PC-3 (cell line): ENCODE measurements at regions of chr3 and their contacts with region 1.

Region 1: GRCh38 chr3:69499899-69500421 is 114.1 kb upstream of the FRMD4B start:
- DNase-seq: no peak
- ATAC-seq: no peak
- H3K4me3 ChIP-seq: no peak overlapping the region
- H3K27ac ChIP-seq: no peak overlapping the region
- H3K4me1 ChIP-seq: no peaks in the 10 kb centered on the region
- H3K27me3 ChIP-seq: no peaks in the 10 kb centered on the region
- CTCF ChIP-seq: no peak

Region 2: DNA sequence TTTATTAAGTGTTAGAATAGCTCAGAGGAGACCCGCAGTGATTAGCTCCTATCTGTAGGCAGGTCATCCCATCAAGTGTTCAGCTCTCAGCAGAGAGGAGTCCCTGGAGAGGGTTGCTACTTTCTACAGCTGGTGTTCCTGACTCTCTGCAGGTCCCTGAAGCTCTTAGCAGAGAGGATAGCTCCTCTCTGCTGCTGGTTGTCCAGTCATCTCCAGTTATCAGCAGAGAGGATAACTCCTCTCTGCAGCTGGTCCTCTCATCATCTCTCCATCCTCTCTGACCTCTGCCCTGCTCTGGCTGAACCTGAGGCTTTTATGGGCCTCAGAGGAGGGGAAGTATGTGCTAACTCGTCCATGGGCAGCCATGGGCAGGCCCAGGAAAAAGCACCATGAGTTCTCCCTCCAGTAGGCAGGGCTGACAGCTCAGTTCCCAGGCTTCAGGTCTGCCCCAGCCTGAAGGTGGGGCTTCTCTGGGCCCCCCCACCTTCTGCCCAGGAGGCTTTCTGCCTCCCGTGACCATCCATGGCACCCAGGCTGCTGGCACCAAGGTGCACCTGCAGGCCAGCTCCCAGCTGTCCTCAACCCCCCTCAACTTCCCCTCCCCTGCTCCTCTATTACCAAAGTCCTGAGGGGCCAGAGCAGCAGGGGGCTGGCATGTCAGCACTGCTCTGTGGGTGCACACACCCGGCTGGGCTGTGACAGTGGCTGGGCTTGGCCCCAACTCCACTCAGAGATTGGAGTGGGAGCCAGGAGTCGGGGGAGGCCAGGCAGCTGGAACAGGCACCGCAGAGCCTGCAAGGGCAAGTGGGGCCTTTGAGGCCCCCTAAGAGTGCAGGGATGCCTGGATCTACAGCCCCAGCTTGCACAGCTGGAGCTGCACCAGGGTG is 15.2 kb before region 1 on chr3:
- CTCF ChIA-PET with region 1: interaction called, 10 read pairs
- POLR2A ChIA-PET with region 1: no interaction called
- intact Hi-C with region 1: no loop called
- DNase-seq: no peak
- ATAC-seq: no peak
- H3K4me3 ChIP-seq: no peak overlapping the region
- H3K27ac ChIP-seq: no peak overlapping the region
- H3K4me1 ChIP-seq: no peaks in the 10 kb centered on the region
- H3K27me3 ChIP-seq: no peaks in the 10 kb centered on the region
- CTCF ChIP-seq: no peak